Breast epithelium (tissue), 4 donors: ENCODE measurements at regions of chr16 and their contacts with region 1.

Region 1: DNA sequence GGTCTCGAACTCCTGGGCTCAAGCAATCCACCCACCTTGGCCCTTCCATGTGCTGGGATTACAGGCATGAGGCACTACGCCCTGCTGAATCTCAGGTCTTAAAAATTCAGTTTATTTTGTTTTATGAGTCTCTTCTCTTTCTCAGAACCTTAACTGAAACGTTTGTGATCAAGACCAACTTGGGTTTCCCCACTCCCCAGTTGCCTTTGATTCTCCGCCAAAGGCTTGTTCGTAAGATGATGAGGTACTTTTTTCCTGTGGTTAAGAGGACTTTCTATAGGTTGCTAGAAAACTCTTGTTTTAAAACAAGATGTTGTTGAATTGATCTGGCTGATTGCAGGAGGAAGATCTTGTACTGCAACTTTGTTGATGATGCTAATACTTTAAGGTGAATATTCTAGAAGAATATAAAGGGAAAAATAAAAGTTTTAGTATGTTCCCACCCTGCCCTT is 11.7 kb downstream of the ABCC1 start:
- DNase-seq: no peak
- H3K4me3 ChIP-seq: no peak overlapping the region
- H3K27ac ChIP-seq: no peak overlapping the region
- H3K4me1 ChIP-seq: no peaks in the 10 kb centered on the region
- H3K27me3 ChIP-seq: no peaks in the 10 kb centered on the region
- CTCF ChIP-seq: no peak
- POLR2A ChIP-seq: no peak

Region 2: GRCh38 chr16:15942931-15943690 is 18.0 kb before region 1 on chr16:
- intact Hi-C with region 1: no loop called
- DNase-seq: no peak
- H3K4me3 ChIP-seq: no peak overlapping the region
- H3K27ac ChIP-seq: no peak overlapping the region
- H3K4me1 ChIP-seq: no peaks in the 10 kb centered on the region
- H3K27me3 ChIP-seq: no peaks in the 10 kb centered on the region
- CTCF ChIP-seq: no peak
- POLR2A ChIP-seq: no peak

Region 3: GRCh38 chr16:15975172-15975571 is 14.1 kb after region 1 on chr16:
- intact Hi-C with region 1: loop called (anchors 2 kb)
- DNase-seq: no peak
- H3K4me3 ChIP-seq: no peak overlapping the region
- H3K27ac ChIP-seq: peak overlapping the region in 1 of 2 donors; percentile 23
- H3K4me1 ChIP-seq: no peaks in the 10 kb centered on the region
- H3K27me3 ChIP-seq: no peaks in the 10 kb centered on the region
- CTCF ChIP-seq: no peak
- POLR2A ChIP-seq: no peak